ENCODE measurements at regions of chr9 and their contacts with region 1.

Region 1: GRCh38 chr9:35071814-35072460 is 488 bp downstream of the VCP start:
- DNase-seq: peak; percentile 85
- ATAC-seq: peak; percentile 68
- H3K4me3 Mint-ChIP-seq: peak overlapping the region; percentile 93
- H3K27ac Mint-ChIP-seq: peak overlapping the region; percentile 96
- H3K4me1 Mint-ChIP-seq: peaks cover 24% of the 10 kb centered on the region
- H3K27me3 Mint-ChIP-seq: no peaks in the 10 kb centered on the region
- CTCF ChIP-seq: no peak

Region 2: GRCh38 chr9:35051069-35051967 is 20.6 kb before region 1 on chr9:
- CTCF ChIA-PET with region 1: interaction called, 25 read pairs
- POLR2A ChIA-PET with region 1: interaction called, 8 read pairs
- DNase-seq: peak; percentile 71
- ATAC-seq: peak; percentile 84
- H3K4me3 Mint-ChIP-seq: no peak overlapping the region
- H3K27ac Mint-ChIP-seq: peak overlapping the region; percentile 54
- H3K4me1 Mint-ChIP-seq: peaks cover 3% of the 10 kb centered on the region; the same call in 1 of the 2 replicates
- H3K27me3 Mint-ChIP-seq: no peaks in the 10 kb centered on the region
- CTCF ChIP-seq: peak; percentile 68

Region 3: DNA sequence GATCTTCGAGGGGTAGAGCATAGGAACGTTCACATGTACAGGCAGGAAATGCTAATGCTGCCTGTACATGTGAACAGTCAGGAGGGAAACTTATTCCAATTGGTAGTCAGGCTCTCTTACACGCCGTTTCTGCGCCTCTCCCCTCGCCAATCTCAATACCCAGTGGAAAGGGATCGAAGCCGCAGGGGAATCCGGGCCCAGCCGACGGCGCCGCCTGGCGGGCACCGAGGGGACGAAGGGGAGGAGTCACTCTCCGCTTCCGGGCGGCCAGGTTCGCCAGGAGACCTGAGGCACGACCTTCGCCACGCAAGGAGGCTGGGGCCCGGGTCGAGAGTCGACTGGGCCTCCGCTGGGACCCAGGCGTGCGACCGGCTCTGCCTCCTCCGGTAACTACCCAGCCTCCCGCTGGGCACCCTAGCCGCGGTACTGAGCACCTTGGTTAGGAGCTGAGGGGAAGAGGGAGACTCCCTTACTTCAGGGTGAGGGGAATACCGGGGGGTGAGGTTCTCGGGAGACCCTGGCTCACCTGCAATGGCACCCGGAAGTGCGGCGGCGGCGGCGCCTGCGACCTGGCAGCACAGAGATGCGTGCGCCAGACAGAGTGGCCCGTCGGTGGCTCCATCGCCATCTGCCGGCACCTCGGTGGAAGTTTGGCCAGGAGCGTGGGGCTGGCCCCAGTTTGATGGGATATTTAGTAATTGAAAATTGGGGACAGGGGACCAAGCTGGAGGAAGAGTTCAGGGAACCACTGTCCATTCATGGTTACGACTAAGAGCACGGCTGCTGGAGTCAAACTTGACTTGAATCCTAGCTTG is 24.3 kb after region 1 on chr9 and contains the start of gene PIGO:
- CTCF ChIA-PET with region 1: interaction called, 14 read pairs
- POLR2A ChIA-PET with region 1: interaction called, 6 read pairs
- DNase-seq: peak; percentile 91
- ATAC-seq: peak; percentile 91
- H3K4me3 Mint-ChIP-seq: peak within 1 kb of the TSS; percentile 85
- H3K27ac Mint-ChIP-seq: peak within 1 kb of the TSS; percentile 92
- H3K4me1 Mint-ChIP-seq: no peaks in the 10 kb centered on the region
- H3K27me3 Mint-ChIP-seq: no peaks in the 10 kb centered on the region
- CTCF ChIP-seq: peak; percentile 64
- total RNA-seq, gene PIGO: 23.8 to 33.3 TPM (median 31.3 TPM) in 3 replicates

Region 4: GRCh38 chr9:35102926-35103659 is 31.2 kb after region 1 on chr9 and contains the start of gene STOML2:
- CTCF ChIA-PET with region 1: interaction called, 12 read pairs
- POLR2A ChIA-PET with region 1: interaction called, 15 read pairs
- DNase-seq: peak; percentile 91
- ATAC-seq: peak; percentile 95
- H3K4me3 Mint-ChIP-seq: peak within 1 kb of the TSS; percentile 96
- H3K27ac Mint-ChIP-seq: peak within 1 kb of the TSS; percentile 99
- H3K4me1 Mint-ChIP-seq: peaks cover 16% of the 10 kb centered on the region
- H3K27me3 Mint-ChIP-seq: no peaks in the 10 kb centered on the region
- CTCF ChIP-seq: no peak
- total RNA-seq, gene STOML2: 208 to 214 TPM (median 210 TPM) in 3 replicates

Region 5: GRCh38 chr9:35161713-35162604 is 90.0 kb after region 1 on chr9 and contains the start of gene UNC13B:
- CTCF ChIA-PET with region 1: no interaction called
- POLR2A ChIA-PET with region 1: interaction called, 14 read pairs
- DNase-seq: peak; percentile 94
- ATAC-seq: peak; percentile 94
- H3K4me3 Mint-ChIP-seq: peak within 1 kb of the TSS; percentile 96
- H3K27ac Mint-ChIP-seq: peak within 1 kb of the TSS; percentile 99
- H3K4me1 Mint-ChIP-seq: peaks cover 42% of the 10 kb centered on the region
- H3K27me3 Mint-ChIP-seq: no peaks in the 10 kb centered on the region
- CTCF ChIP-seq: no peak
- total RNA-seq, gene UNC13B: 46.1 to 51.8 TPM (median 49.3 TPM) in 3 replicates

Region 6: DNA sequence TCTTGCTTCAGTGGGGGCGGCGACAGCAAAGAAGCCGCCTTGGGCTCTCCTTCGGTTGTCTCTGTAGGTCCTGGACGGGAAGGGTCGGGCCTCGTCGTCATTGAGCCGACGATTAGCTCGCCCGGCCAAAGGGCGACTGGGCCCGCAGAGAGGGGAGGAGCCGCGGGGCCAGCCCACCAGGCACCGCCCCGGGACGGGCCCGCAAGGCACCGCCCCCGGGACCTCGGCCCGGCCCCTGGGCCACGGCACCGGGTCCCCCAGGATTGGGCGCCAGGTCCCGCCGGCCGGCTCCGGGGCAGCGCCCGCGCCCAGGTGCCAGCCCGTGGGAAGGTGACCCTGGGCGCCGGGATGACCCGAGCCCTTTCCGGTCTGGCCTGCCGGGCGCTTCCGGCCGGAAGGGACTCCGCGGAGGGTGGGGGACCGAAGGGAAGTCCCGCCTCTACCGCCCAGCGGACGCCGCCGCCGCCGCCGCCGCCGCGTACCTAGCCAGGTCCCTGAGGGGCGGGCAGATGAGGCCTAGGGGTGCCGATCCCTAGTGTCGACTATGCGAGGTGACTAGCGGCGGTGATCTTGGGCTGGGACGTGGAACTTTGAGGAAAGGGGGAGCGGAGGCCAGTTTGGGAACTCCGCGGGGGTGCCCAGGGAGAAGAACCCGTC is 677.0 kb after region 1 on chr9 and contains the starts of genes GBA2 and RGP1:
- CTCF ChIA-PET with region 1: no interaction called
- POLR2A ChIA-PET with region 1: no interaction called
- DNase-seq: peak; percentile 83
- ATAC-seq: peak; percentile 84
- H3K4me3 Mint-ChIP-seq: peak within 1 kb of the TSS; percentile 92
- H3K27ac Mint-ChIP-seq: peak within 1 kb of the TSS; percentile 74
- H3K4me1 Mint-ChIP-seq: peaks cover 27% of the 10 kb centered on the region
- H3K27me3 Mint-ChIP-seq: no peaks in the 10 kb centered on the region
- CTCF ChIP-seq: no peak
- total RNA-seq, gene GBA2: 85.5 to 104 TPM (median 89.7 TPM) in 3 replicates
- total RNA-seq, gene RGP1: 29.7 to 30.0 TPM (median 30.0 TPM) in 3 replicates

Measured in WTC11 (cell line).